ENCODE measurements at regions of chr13 and their contacts with region 1.

Region 1: DNA sequence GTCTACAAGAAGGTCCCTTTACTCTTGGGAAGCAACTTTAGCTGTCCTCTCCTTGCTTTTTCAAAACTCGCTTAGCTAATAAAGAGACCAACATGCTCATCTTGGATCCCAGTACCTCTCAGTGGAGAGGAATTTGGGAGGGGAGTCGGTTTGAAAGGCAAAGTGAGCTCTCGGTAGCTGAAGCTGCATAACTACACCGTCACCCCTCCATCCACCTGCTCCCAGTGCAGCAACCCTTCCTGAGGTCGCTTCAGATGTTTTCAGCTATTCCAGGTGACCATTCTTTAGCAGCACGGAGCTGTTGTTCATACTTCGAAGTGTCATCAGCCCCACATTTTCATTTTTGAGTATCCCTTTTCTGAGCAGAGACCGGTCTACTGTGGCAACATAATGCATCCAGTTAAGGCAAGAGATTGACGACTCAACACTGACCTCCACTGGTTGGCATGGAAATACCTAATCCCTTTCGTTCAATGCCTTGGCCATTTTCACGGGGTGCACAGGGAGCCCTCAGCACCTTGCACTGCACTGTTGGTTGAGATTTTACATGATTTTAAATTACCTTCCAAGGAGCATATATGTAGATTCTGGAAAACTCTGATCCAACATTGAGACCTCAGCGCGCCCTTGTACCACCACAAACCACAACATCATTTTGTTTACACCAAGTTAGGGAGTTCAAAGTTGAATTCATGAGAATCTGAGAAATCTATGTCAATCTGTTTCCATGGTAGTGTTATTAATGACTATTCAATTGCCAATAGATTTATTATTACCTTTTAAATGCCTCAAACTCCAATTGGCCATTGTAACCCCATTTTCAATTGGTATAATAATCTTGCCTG is 42.2 kb downstream of the DLEU7 start:
- DNase-seq: peak; percentile 71
- ATAC-seq: peak; percentile 86
- H3K4me3 ChIP-seq: no peak overlapping the region
- H3K27ac ChIP-seq: no peak overlapping the region
- H3K4me1 ChIP-seq: peaks cover 9% of the 10 kb centered on the region; the same call in 1 of the 2 replicates
- H3K27me3 ChIP-seq: no peaks in the 10 kb centered on the region
- CTCF ChIP-seq: peak; percentile 73

Region 2: GRCh38 chr13:49996951-49997895 is 804.1 kb before region 1 on chr13 and contains the start of gene TRIM13:
- CTCF ChIA-PET with region 1: no interaction called
- POLR2A ChIA-PET with region 1: no interaction called
- intact Hi-C with region 1: loop called (anchors 5 kb)
- DNase-seq: peak; percentile 79
- ATAC-seq: peak; percentile 80
- H3K4me3 ChIP-seq: peak within 1 kb of the TSS; percentile 95
- H3K27ac ChIP-seq: peak within 1 kb of the TSS; percentile 89
- H3K4me1 ChIP-seq: peaks cover 23% of the 10 kb centered on the region
- H3K27me3 ChIP-seq: no peaks in the 10 kb centered on the region
- CTCF ChIP-seq: peak; percentile 77
- total RNA-seq, gene TRIM13: 6.7 and 13.7 TPM in 2 replicates

Region 3: DNA sequence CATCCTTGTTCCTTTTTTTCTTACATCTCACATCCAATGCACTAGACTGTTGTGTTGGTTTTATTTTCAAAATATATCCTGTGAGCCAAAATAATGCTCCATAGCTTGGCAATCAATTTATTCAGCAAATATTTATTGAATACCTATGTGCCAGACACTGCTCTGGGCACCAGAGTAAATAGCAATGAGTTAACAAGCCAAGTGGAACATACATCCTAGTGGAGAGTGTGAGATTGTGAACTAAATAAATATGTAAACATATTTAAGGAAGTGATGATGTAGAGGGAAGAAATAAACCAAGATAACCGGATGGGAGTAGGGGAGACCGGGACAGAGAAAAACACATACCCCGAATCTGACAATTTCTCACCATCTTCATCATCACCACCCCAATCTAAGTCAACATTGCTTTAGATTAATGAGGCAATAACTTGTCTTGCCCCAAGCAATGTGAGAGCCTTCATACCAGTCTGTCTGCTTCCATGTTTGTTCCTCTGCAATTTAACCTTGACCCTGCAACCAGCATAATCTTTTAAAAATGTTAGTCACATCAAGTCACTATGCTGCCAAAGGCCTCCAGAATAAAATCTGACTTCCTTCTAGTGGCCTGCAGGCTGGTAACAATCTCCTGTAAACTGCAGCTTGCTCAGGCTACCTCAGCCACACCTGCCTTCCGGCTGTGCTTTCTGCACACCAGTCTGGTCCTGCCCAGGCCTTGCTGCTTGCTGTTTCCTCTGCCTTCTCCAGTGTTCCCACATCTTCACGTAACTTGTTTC is 157.0 kb before region 1 on chr13:
- CTCF ChIA-PET with region 1: no interaction called
- POLR2A ChIA-PET with region 1: no interaction called
- intact Hi-C with region 1: loop called (anchors 5 kb)
- DNase-seq: peak; percentile 69
- ATAC-seq: peak; percentile 81
- H3K4me3 ChIP-seq: no peak overlapping the region
- H3K27ac ChIP-seq: peak overlapping the region; percentile 79
- H3K4me1 ChIP-seq: peaks cover 18% of the 10 kb centered on the region
- H3K27me3 ChIP-seq: no peaks in the 10 kb centered on the region
- CTCF ChIP-seq: no peak

Region 4: DNA sequence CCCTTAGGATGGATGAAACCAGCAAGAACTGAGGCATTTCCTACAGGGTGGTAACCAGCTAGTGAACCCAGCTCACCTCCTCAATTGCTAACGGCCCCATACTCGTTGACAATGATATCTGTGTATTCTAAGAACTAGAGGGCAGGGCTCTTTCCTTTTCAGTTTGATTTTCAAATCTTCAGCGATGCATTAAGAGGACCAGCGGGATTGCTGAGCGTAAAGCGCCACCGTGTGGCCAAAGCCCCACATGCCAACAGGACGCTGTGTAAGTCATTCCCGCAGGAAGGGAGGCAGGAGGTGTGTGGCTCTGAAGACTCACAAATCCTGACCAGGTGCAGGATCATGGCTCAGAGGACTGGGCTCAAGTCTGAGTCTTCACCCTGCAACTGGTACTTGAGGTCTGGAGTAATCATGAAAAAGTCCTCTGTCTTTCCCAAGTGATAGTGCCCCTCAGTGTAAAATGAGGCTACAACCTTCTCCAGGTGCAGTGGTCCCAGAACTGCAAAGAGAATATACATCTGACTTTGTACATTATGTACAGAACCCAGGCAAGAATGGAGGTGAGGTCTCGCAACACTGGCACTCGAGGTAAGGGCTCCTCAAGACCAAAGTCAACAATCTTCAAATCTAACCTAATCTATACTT is 268.8 kb after region 1 on chr13:
- CTCF ChIA-PET with region 1: no interaction called
- POLR2A ChIA-PET with region 1: no interaction called
- intact Hi-C with region 1: loop called (anchors 10 kb)
- DNase-seq: peak; percentile 85
- ATAC-seq: peak; percentile 95
- H3K4me3 ChIP-seq: no peak overlapping the region
- H3K27ac ChIP-seq: no peak overlapping the region
- H3K4me1 ChIP-seq: no peaks in the 10 kb centered on the region
- H3K27me3 ChIP-seq: no peaks in the 10 kb centered on the region
- CTCF ChIP-seq: peak; percentile 87